ENCODE measurements at regions of chr15 and their contacts with region 1.

Region 1: GRCh38 chr15:100053474-100054121 is 288.2 kb downstream of the ADAMTS17 start:
- DNase-seq: no peak
- ATAC-seq: no peak
- H3K4me3 ChIP-seq: no peak overlapping the region
- H3K27ac ChIP-seq: no peak overlapping the region
- H3K4me1 ChIP-seq: peaks cover 0 to 7% (median 0%) of the 10 kb centered on the region in 12 donors
- H3K27me3 ChIP-seq: no peaks in the 10 kb centered on the region
- CTCF ChIP-seq: no peak
- POLR2A ChIP-seq: no peak

Region 2: DNA sequence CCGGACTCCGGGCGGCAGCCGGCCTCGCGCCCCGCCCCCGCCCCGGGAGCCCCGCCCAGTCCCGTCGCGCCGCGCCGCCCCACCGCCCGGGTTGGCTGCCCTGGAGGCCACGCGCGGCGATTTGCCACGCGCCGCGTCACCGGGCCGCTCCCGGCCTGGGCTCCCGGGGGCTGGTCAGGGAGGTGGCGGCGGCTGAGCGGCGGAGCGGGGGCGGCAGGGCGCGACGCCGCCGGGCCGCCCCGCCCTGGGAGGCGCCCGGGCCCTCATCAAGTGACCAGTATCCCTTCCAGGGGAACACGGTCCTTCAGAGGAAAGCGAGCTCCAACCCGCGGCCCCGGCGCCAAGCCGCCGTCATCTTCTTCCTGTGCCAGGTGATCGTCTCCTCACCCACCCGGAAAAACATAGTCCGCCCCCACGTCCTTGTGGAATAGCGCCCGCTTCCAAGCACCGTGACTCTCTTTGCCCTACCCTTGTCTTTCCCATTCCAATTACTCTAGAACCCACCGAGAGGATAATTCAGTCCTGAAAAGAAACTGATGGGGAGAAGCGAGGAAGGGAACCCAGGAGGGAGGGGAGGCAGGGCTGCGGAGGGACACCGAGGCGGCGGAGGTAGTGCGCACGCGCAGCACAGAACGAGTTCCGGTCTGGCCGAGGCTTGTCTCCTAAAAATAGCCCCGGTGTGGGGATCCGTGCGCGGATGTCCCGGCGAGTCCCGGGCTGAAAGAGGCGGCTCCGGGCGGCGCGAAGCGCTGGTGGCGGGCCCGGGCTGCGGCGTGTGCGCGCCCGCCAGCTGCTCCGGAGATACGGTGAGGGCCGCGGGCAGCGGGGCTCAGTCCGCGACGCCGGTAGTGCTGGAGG is 488.1 kb before region 1 on chr15 and contains the start of gene MEF2A:
- intact Hi-C with region 1: no loop called
- DNase-seq: peak; percentile 96 to 98 (median 97)
- ATAC-seq: peak; percentile 79 to 85 (median 84)
- H3K4me3 ChIP-seq: peak within 1 kb of the TSS; percentile 73 to 97 (median 86)
- H3K27ac ChIP-seq: peak within 1 kb of the TSS; percentile 97 to 100 (median 99)
- H3K4me1 ChIP-seq: peaks cover 6 to 57% (median 35%) of the 10 kb centered on the region in 12 donors
- H3K27me3 ChIP-seq: no peaks in the 10 kb centered on the region
- CTCF ChIP-seq: no peak
- POLR2A ChIP-seq: peak in 1 of 2 donors; percentile 67
- total RNA-seq, gene MEF2A: 131 to 192 (median 160) TPM

Region 3: DNA sequence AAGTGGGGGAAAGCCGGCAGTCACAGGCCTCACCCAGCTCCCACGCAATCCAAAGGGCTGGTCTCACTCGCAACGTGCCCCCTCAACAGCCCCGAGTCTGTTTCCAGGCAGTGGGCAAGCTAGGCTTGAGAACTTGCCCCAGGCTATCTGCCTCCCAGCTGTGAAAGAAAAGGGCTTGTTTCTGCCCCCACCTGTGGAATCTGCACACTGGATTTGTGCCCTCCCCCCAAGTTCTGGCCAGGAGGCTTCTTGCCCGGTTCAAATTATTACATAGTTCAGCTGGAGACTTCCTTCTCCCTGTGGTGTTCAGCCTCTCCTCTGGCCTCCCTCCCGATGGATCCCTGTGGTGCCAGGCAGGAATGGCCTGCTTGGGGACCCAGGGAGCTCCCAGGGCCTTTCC is 36.5 kb before region 1 on chr15:
- intact Hi-C with region 1: no loop called
- DNase-seq: no peak
- ATAC-seq: no peak
- H3K4me3 ChIP-seq: no peak overlapping the region
- H3K27ac ChIP-seq: no peak overlapping the region
- H3K4me1 ChIP-seq: peaks cover 0 to 21% (median 0%) of the 10 kb centered on the region in 12 donors
- H3K27me3 ChIP-seq: no peaks in the 10 kb centered on the region
- CTCF ChIP-seq: no peak
- POLR2A ChIP-seq: no peak

Region 4: DNA sequence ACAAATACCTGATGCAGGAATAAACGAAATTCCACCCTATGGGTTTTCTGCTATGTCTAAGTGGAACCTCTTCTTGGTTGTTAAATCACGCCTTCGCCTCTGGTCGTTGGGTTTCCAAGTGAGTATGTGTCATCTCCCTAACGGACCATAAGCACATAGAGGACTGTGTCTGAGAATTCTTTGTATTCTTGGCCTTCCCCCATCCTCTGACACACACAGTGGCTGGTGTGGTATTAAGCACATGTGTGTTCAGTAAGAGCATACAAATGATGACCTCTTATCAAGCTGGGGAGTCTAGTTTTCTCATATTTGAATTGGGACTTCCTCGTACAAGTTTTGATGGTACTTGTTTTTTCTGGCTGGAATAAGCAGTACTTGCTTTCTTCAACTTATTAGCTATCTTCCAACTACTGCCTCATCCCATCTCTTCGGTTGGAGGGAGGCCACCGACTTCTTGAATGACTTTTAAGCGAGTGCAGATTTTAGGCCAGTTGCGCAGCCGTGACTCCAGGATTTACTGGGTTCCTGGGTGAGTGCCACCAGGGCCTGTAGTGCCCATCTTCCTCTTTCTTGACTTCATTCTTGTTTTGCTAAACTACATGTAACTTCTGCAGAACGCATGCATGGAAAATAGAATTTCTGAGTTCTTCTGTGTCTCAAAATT is 48.0 kb after region 1 on chr15:
- intact Hi-C with region 1: loop called in 1 of 10 experiments (anchors 10 kb)
- DNase-seq: peak in 1 of 5 donors; percentile 63
- ATAC-seq: peak; percentile 54 to 88 (median 66)
- H3K4me3 ChIP-seq: no peak overlapping the region
- H3K27ac ChIP-seq: peak overlapping the region in 5 of 12 donors; percentile 16 to 61 (median 18)
- H3K4me1 ChIP-seq: peaks cover 0 to 8% (median 0%) of the 10 kb centered on the region in 12 donors
- H3K27me3 ChIP-seq: no peaks in the 10 kb centered on the region
- CTCF ChIP-seq: no peak
- POLR2A ChIP-seq: no peak

Measured in heart left ventricle (tissue), 16 donors.